Activated CD4-positive, alpha-beta T cell treated with anti-CD3 and anti-CD28 coated beads for 36 hours (primary cell): ENCODE measurements at regions of chr15 and their contacts with region 1.

Region 1: GRCh38 chr15:36883713-36884517 is 216.4 kb downstream of the MEIS2 start:
- DNase-seq: peak; percentile 89
- ATAC-seq: peak; percentile 65
- H3K4me3 Mint-ChIP-seq: no peak overlapping the region
- H3K27ac Mint-ChIP-seq: no peak overlapping the region
- H3K4me1 Mint-ChIP-seq: peaks cover 23% of the 10 kb centered on the region
- H3K27me3 Mint-ChIP-seq: peaks cover 89% of the 10 kb centered on the region

Region 2: DNA sequence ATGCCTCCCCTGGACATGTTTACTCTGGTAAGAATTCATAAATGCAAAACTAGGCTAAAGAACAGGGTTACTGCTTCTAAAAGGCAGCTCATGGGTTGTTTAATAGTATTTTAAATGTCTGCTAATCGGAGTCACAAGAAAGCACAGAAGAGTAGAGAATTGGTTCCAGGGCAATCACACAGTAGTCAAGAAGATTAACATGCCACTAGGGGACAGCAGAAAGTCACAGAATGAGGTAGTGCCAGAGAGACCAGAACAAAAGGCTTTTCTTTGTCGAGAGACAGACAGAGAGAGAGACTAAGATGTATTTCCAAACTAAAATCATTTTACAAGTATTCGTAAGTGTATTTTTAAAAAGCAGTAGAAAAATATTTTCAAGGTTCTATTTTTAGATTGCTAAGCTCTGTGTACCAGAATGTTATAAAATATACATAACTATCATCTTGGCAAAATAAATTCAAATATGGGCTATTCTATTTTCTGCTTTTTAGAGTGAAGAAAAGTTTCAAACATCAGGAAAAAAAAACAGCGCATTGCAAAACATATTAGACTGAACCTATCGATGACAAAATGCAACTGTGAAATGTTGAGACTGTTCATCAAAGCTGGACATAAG is 382.7 kb before region 1 on chr15:
- CTCF ChIA-PET with region 1: no interaction called
- POLR2A ChIA-PET with region 1: no interaction called
- intact Hi-C with region 1: loop called (anchors 5 to 10 kb)
- DNase-seq: peak; percentile 7
- ATAC-seq: peak; percentile 39
- H3K4me3 Mint-ChIP-seq: no peak overlapping the region
- H3K27ac Mint-ChIP-seq: no peak overlapping the region
- H3K4me1 Mint-ChIP-seq: no peaks in the 10 kb centered on the region
- H3K27me3 Mint-ChIP-seq: peaks cover 15% of the 10 kb centered on the region

Region 3: DNA sequence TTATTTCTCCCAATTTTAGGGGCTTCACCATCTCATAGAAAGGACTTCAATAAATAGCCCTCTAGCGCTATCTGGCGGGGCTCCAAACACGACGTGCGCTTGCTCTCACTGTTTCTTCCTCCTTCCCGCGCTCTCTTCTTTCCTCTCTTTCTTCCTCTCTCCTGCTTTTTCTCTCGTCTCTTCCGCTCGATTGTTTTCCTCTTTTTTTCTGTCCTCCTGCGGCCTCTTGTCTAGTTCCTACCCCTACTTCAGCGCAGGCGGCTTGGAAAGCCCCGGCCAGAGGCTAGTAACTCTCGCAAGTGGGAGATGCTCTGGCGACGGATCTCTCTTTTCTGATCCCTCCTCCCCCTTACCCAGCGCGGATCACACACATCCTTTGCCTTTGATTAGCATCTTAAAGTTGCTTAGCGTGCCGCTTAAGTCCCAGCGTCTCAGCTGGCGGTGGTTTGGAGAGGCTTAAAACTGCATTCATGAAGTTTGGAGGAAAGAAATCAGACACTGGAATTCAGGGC is 222.6 kb after region 1 on chr15:
- CTCF ChIA-PET with region 1: no interaction called
- POLR2A ChIA-PET with region 1: no interaction called
- intact Hi-C with region 1: loop called (anchors 2 kb)
- DNase-seq: peak; percentile 48
- ATAC-seq: no peak
- H3K4me3 Mint-ChIP-seq: no peak overlapping the region
- H3K27ac Mint-ChIP-seq: no peak overlapping the region
- H3K4me1 Mint-ChIP-seq: peaks cover 20% of the 10 kb centered on the region
- H3K27me3 Mint-ChIP-seq: peaks cover 88% of the 10 kb centered on the region

Region 4: DNA sequence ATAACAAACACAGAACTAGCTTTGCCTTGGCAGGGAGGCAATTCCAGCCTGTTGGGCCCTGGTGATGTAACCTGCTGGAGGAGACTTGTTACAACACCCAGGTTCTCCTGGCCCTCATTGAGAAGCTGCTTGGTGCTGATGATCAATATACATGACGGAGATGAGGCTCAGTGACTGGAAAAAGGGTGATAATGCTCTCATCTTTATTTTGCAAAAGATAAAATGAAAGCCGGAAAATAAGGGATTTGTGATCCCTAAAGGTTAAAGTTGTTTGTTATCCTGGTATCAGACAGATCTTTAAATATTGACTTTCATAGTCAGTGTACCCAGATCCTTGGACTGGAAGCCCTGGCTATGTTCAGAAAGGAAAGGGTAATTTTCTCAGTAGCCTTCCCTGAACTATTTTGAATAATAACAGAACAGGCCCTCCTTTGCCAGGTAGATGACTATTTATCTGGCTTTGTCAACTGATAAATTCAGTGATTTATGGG is 335.3 kb after region 1 on chr15:
- CTCF ChIA-PET with region 1: no interaction called
- POLR2A ChIA-PET with region 1: no interaction called
- intact Hi-C with region 1: loop called in 1 of 2 experiments (anchors 10 kb)
- DNase-seq: no peak
- ATAC-seq: no peak
- H3K4me3 Mint-ChIP-seq: no peak overlapping the region
- H3K27ac Mint-ChIP-seq: no peak overlapping the region
- H3K4me1 Mint-ChIP-seq: no peaks in the 10 kb centered on the region
- H3K27me3 Mint-ChIP-seq: no peaks in the 10 kb centered on the region